ENCODE measurements at regions of chr15 and their contacts with region 1.

Region 1: GRCh38 chr15:65400760-65401610 is 21.8 kb downstream of the IGDCC4 start:
- DNase-seq: peak in 13 of 14 experiments; percentile 18 to 61 (median 33)
- ATAC-seq: peak; percentile 51
- H3K4me3 ChIP-seq: no peak overlapping the region
- H3K4me3 Mint-ChIP-seq: no peak overlapping the region
- H3K27ac ChIP-seq: no peak overlapping the region
- H3K27ac Mint-ChIP-seq: no peak overlapping the region
- H3K4me1 ChIP-seq: peaks cover 4% of the 10 kb centered on the region
- H3K4me1 Mint-ChIP-seq: peaks cover 11% of the 10 kb centered on the region
- H3K27me3 ChIP-seq: peaks cover 18 to 28% of the 10 kb centered on the region in 2 experiments
- H3K27me3 Mint-ChIP-seq: peaks cover 66% of the 10 kb centered on the region
- CTCF ChIP-seq: peak; percentile 51

Region 2: GRCh38 chr15:65086017-65086679 is 314.8 kb before region 1 on chr15:
- CTCF ChIA-PET with region 1: no interaction called
- POLR2A ChIA-PET with region 1: no interaction called
- intact Hi-C with region 1: no loop called
- DNase-seq: peak in 2 of 14 experiments; percentile 8 to 21
- ATAC-seq: no peak
- H3K4me3 ChIP-seq: no peak overlapping the region
- H3K4me3 Mint-ChIP-seq: no peak overlapping the region
- H3K27ac ChIP-seq: no peak overlapping the region
- H3K27ac Mint-ChIP-seq: no peak overlapping the region
- H3K4me1 ChIP-seq: peaks cover 11% of the 10 kb centered on the region
- H3K4me1 Mint-ChIP-seq: peaks cover 11% of the 10 kb centered on the region
- H3K27me3 ChIP-seq: no peaks in the 10 kb centered on the region
- H3K27me3 Mint-ChIP-seq: peaks cover 10% of the 10 kb centered on the region
- CTCF ChIP-seq: no peak

Region 3: DNA sequence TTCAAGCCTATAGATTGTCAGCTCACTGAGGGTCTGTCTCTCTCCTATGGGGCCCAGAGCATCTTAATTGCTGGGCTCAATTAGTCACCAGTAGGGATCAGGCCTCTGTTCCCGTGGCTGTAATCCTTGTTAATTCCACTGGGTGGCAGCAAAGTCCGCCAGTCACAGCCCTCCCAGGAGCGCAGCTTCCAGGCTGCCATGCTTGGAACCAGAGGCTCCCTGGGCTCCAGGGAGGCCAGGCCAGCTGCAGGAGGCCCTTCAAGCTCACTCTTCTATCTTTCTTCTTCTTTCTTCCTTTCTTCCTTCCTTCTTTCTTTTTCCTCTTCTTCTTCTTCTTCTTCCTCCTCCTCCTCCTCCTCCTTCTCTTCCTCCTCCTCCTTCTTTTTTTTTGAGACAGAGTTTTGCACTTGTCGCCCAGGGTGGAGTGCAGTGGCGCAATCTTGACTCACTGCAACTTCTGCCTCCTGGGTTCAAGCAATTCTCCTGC is 82.1 kb before region 1 on chr15:
- CTCF ChIA-PET with region 1: no interaction called
- POLR2A ChIA-PET with region 1: no interaction called
- intact Hi-C with region 1: loop called in 1 of 2 experiments (anchors 5 kb)
- DNase-seq: peak; percentile 56 to 87 (median 69)
- ATAC-seq: peak; percentile 100
- H3K4me3 ChIP-seq: no peak overlapping the region
- H3K4me3 Mint-ChIP-seq: no peak overlapping the region
- H3K27ac ChIP-seq: no peak overlapping the region
- H3K27ac Mint-ChIP-seq: no peak overlapping the region
- H3K4me1 ChIP-seq: peaks cover 2% of the 10 kb centered on the region
- H3K4me1 Mint-ChIP-seq: no peaks in the 10 kb centered on the region
- H3K27me3 ChIP-seq: peaks cover 0 to 8% of the 10 kb centered on the region in 2 experiments
- H3K27me3 Mint-ChIP-seq: peaks cover 4% of the 10 kb centered on the region
- CTCF ChIP-seq: peak; percentile 92

Region 4: GRCh38 chr15:65494071-65494470 is 93.1 kb after region 1 on chr15:
- CTCF ChIA-PET with region 1: no interaction called
- POLR2A ChIA-PET with region 1: no interaction called
- intact Hi-C with region 1: no loop called
- DNase-seq: no peak
- ATAC-seq: no peak
- H3K4me3 ChIP-seq: no peak overlapping the region
- H3K4me3 Mint-ChIP-seq: no peak overlapping the region
- H3K27ac ChIP-seq: no peak overlapping the region
- H3K27ac Mint-ChIP-seq: no peak overlapping the region
- H3K4me1 ChIP-seq: peaks cover 4% of the 10 kb centered on the region
- H3K4me1 Mint-ChIP-seq: peaks cover 7% of the 10 kb centered on the region
- H3K27me3 ChIP-seq: no peaks in the 10 kb centered on the region
- H3K27me3 Mint-ChIP-seq: no peaks in the 10 kb centered on the region
- CTCF ChIP-seq: no peak